Activated CD4-positive, alpha-beta T cell treated with anti-CD3 and anti-CD28 coated beads for 36 hours (primary cell): ENCODE measurements at regions of chr1 and their contacts with region 1.

Region 1: GRCh38 chr1:154479764-154480421 is 22.1 kb upstream of the TDRD10 start:
- DNase-seq: peak; percentile 67
- ATAC-seq: peak; percentile 84
- H3K4me3 Mint-ChIP-seq: no peak overlapping the region
- H3K27ac Mint-ChIP-seq: no peak overlapping the region
- H3K4me1 Mint-ChIP-seq: peaks cover 27% of the 10 kb centered on the region
- H3K27me3 Mint-ChIP-seq: no peaks in the 10 kb centered on the region

Region 2: GRCh38 chr1:153253693-153254092 is 1226.2 kb before region 1 on chr1:
- CTCF ChIA-PET with region 1: no interaction called
- POLR2A ChIA-PET with region 1: no interaction called
- intact Hi-C with region 1: no loop called
- DNase-seq: no peak
- ATAC-seq: peak; percentile 55
- H3K4me3 Mint-ChIP-seq: no peak overlapping the region
- H3K27ac Mint-ChIP-seq: no peak overlapping the region
- H3K4me1 Mint-ChIP-seq: peaks cover 4% of the 10 kb centered on the region
- H3K27me3 Mint-ChIP-seq: peaks cover 14% of the 10 kb centered on the region

Region 3: DNA sequence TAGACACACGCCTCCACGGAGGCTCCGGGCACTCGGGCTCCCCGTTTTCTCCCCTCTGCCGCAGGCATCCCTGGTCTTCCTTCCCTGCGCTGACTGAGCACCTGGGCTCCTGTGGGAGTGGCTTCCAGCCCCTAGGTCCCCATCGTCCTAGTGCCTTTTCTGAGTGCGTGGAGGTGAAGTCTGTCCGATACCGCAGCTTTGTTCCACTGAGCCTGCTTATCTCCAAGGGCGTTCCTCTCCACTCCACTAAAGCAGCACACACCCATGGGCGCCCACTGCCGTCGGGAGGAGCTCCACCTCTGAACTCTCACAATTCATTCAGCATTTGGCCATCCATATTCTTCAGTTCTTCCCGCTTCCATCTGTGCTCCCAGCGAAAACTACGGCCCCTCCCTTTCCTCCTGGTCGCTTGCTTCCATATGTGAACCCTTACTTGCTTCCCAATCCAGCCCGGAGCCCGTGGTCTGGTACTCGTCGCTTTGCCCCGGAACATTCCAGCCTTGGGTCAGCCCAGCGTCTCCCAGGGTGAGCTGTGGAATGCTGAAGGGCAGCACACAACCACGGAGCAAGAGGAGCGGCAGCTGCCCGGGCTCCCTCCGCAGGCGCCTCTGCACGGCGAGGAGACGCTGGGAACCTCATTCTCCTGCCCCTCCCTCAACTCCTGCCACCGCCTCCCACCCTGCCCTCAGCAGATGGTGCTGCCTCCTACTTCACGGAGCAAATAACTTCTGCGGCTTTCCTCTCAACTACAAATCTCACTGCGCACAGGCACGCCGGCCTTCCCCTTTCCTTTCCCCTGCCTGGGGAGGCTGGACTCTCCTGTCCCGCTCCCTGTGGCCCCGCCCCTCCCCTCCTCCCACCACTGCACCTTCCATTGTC is 127.1 kb before region 1 on chr1:
- CTCF ChIA-PET with region 1: interaction called, 4 read pairs
- POLR2A ChIA-PET with region 1: no interaction called
- intact Hi-C with region 1: loop called (anchors 2 to 5 kb)
- DNase-seq: peak; percentile 80
- ATAC-seq: peak; percentile 84
- H3K4me3 Mint-ChIP-seq: peak overlapping the region; percentile 72
- H3K27ac Mint-ChIP-seq: peak overlapping the region; percentile 81
- H3K4me1 Mint-ChIP-seq: peaks cover 32% of the 10 kb centered on the region
- H3K27me3 Mint-ChIP-seq: no peaks in the 10 kb centered on the region

Region 4: GRCh38 chr1:154493276-154493675 is 13.4 kb after region 1 on chr1:
- CTCF ChIA-PET with region 1: interaction called, 63 read pairs
- POLR2A ChIA-PET with region 1: interaction called, 6 read pairs
- intact Hi-C with region 1: no loop called
- DNase-seq: no peak
- ATAC-seq: no peak
- H3K4me3 Mint-ChIP-seq: no peak overlapping the region
- H3K27ac Mint-ChIP-seq: no peak overlapping the region
- H3K4me1 Mint-ChIP-seq: peaks cover 41% of the 10 kb centered on the region
- H3K27me3 Mint-ChIP-seq: peaks cover 4% of the 10 kb centered on the region

Region 5: DNA sequence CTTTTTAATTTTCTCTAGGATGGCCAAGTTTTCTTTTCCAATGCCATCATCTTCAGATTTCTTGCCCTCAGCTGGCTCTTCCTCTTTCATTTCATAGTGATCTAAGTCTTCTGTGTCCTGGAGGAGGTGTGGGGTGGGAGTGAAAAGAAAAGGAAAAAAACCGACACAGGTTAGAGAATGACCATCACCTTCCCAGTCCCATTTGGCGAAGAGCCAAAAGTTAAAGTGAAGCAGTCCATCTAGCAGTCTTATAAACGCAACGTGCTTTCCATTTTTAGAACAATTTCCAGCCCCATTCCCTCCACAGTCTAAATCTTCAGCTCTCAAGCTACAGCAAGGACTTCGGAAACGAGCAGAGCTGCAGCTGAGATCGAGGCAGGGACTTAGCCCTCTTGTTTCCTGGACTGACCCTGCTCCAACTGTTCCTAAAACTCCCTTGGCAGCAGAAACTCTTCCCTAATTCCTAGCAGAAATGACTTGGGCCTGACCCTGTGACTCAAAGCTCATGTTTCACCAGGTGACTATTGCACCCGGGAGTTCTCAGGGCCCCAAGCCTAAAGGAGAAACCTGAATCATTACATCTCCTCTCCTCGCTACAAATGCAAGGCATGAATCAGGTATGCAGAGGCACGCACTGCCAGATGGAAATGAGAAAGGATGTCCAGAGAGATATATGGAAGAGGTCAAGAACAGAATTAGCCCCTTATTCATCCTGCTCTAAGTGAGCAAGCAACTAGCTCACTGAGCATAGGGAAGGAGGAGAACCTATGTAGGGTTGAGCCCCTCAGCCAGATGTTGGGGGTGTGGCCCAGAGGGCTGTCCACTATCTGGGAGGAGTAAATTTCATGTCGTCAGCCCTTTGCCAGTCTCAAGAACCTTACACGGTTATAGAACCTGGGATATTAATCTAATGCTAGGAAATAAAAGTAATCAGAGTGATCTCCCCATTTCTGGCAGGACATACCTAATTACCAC is 73.5 kb after region 1 on chr1:
- CTCF ChIA-PET with region 1: interaction called, 29 read pairs
- POLR2A ChIA-PET with region 1: no interaction called
- intact Hi-C with region 1: no loop called
- DNase-seq: no peak
- ATAC-seq: no peak
- H3K4me3 Mint-ChIP-seq: no peak overlapping the region
- H3K27ac Mint-ChIP-seq: peak overlapping the region; percentile 4
- H3K4me1 Mint-ChIP-seq: peaks cover 19% of the 10 kb centered on the region
- H3K27me3 Mint-ChIP-seq: no peaks in the 10 kb centered on the region